ENCODE measurements at regions of chr11 and their contacts with region 1.

Region 1: DNA sequence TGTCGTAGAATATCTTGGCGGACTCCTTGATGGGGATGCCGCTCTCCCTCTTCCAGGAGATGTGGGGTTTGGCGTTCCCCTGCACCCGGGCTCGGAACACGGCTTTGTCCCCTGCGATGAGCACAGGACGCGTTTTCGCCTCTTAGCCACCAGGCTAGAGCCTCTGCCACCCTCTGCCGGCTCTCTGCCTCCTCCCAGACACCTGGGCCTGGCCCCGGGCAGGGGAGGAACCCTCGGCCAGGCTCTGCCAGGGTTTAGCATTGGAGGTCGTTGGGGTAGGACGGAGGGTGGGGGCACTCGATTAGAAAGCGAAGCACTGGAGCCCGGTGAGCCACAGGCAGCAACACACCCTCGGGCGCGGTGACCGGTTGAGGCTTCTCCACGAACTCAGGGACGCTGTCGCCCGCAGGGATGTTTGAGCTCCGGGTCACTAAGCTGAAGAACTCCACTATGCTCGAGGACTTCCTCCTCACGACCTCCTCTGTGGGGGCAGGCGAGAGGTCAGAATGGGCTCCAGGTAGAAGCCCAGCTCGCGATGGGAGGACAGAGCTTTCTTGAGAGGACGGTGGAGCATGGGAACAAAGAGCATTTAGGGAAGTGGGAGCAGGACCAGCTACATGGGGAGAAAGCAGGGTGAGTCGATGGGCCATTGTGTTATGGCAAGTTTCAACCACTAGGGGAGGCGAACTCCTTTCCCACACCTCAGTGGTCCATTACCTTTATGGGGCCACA is 4.3 kb downstream of the IGSF22 start:
- DNase-seq: peak; percentile 70
- H3K4me3 Mint-ChIP-seq: peak overlapping the region; percentile 78
- H3K27ac Mint-ChIP-seq: no peak overlapping the region
- H3K4me1 Mint-ChIP-seq: peaks cover 2% of the 10 kb centered on the region
- H3K27me3 Mint-ChIP-seq: no peaks in the 10 kb centered on the region

Region 2: DNA sequence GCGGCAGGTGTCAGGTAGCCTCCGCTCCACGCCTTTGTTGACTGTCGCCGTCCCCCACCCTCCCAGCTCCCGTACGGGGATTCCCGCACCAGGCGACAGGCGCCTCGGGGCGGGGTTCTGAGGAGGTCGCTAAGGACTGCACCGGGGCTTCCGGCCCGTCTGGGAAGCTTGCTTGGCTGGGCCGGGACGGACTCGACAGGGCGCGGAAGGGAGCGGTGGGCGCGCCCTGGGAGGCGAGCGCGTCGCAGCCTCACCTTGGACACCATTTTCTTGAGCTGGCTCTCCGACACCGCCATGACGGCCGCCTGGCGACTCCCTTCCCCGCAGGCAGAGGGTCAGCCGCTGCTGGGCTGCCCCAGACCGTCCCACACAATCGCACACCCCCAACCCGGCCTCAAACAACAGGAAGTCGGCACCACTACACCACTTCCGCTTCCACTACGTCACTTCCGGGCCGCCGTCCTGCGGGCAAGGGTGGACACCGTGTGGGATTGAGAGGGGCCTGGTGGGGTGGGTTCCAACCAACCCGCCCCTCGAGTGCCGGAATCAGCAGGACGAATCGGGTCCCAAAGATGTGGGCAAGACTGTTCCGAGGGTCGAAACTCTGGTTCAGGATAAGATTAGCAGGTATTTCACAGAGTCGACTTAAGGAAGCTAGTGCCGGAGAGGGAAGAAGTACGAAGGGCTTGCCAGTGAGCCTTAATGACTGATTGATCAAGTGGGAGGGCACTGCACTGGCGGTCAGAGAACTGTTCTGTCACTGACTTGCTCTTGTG is 195.0 kb before region 1 on chr11 and contains the start of gene TSG101:
- CTCF ChIA-PET with region 1: interaction called, 7 read pairs
- intact Hi-C with region 1: loop called (anchors 1 kb)
- DNase-seq: peak; percentile 94
- H3K4me3 Mint-ChIP-seq: peak within 1 kb of the TSS; percentile 100
- H3K27ac Mint-ChIP-seq: peak within 1 kb of the TSS; percentile 100
- H3K4me1 Mint-ChIP-seq: peaks cover 45% of the 10 kb centered on the region
- H3K27me3 Mint-ChIP-seq: no peaks in the 10 kb centered on the region
- total RNA-seq, gene TSG101: 33.2 to 40.5 TPM

Region 3: GRCh38 chr11:18588297-18589252 is 133.2 kb before region 1 on chr11 and contains the start of gene UEVLD:
- CTCF ChIA-PET with region 1: interaction called, 4 read pairs
- intact Hi-C with region 1: loop called (anchors 1 kb)
- DNase-seq: peak; percentile 63
- H3K4me3 Mint-ChIP-seq: no peak within 1 kb of the TSS
- H3K27ac Mint-ChIP-seq: no peak within 1 kb of the TSS
- H3K4me1 Mint-ChIP-seq: peaks cover 8% of the 10 kb centered on the region
- H3K27me3 Mint-ChIP-seq: no peaks in the 10 kb centered on the region
- total RNA-seq, gene UEVLD: 8.9 to 9.2 TPM

Region 4: GRCh38 chr11:18669220-18669598 is 52.5 kb before region 1 on chr11:
- CTCF ChIA-PET with region 1: interaction called, 4 read pairs
- intact Hi-C with region 1: loop called (anchors 2 kb)
- DNase-seq: peak; percentile 23
- H3K4me3 Mint-ChIP-seq: no peak overlapping the region
- H3K27ac Mint-ChIP-seq: peak overlapping the region; percentile 63
- H3K4me1 Mint-ChIP-seq: peaks cover 70% of the 10 kb centered on the region
- H3K27me3 Mint-ChIP-seq: no peaks in the 10 kb centered on the region

Region 5: GRCh38 chr11:18706330-18707243 is 15.1 kb before region 1 on chr11:
- CTCF ChIA-PET with region 1: interaction called, 51 read pairs
- intact Hi-C with region 1: no loop called
- DNase-seq: peak; percentile 77
- H3K4me3 Mint-ChIP-seq: peak overlapping the region; percentile 71
- H3K27ac Mint-ChIP-seq: peak overlapping the region; percentile 69
- H3K4me1 Mint-ChIP-seq: peaks cover 23% of the 10 kb centered on the region
- H3K27me3 Mint-ChIP-seq: no peaks in the 10 kb centered on the region

Region 6: DNA sequence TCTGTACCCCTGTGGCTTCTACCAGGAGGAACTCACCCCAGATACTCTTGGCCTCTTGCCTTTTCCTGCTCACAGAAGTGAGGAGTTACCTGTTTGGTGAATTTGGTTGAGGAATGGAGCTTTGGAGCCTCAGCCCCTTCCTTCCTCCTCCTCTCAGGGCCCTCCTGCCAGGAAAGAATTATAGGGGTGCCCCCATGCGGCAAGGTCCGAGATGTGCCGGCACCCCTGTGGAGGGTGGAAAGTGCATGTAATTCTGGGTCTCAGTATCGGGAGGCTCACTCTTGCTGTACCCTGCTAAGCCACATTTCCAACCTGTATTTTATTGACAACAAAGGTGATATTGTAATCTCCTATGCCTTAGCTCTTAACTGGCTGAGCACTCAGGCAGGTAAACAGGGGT is 18.0 kb after region 1 on chr11:
- CTCF ChIA-PET with region 1: interaction called, 52 read pairs
- intact Hi-C with region 1: no loop called
- DNase-seq: no peak
- H3K4me3 Mint-ChIP-seq: no peak overlapping the region
- H3K27ac Mint-ChIP-seq: no peak overlapping the region
- H3K4me1 Mint-ChIP-seq: no peaks in the 10 kb centered on the region
- H3K27me3 Mint-ChIP-seq: no peaks in the 10 kb centered on the region

Region 7: DNA sequence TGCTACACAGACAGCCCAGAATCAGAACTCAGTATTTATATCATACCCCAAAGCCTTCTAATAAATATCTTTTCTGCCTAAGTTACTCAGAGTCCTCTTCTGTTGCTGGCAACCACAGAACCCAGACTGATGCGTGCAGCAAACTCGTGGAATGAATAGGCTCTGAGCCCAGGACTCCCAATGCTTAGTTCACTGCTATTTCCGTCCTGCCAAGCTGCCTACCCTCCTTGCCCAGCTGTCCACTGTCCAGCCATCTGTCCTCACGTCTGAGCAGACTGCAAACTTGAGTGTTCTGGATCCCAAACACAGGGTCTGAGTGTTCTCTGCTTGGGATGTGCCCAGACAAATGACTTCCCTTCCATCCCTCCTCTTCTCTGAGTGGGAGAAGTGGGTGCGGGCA is 50.5 kb after region 1 on chr11:
- CTCF ChIA-PET with region 1: no interaction called
- intact Hi-C with region 1: no loop called
- DNase-seq: no peak
- H3K4me3 Mint-ChIP-seq: no peak overlapping the region
- H3K27ac Mint-ChIP-seq: no peak overlapping the region
- H3K4me1 Mint-ChIP-seq: peaks cover 2% of the 10 kb centered on the region
- H3K27me3 Mint-ChIP-seq: no peaks in the 10 kb centered on the region

Region 8: GRCh38 chr11:18865951-18866350 is 144.2 kb after region 1 on chr11:
- CTCF ChIA-PET with region 1: no interaction called
- intact Hi-C with region 1: no loop called
- DNase-seq: no peak
- H3K4me3 Mint-ChIP-seq: no peak overlapping the region
- H3K27ac Mint-ChIP-seq: no peak overlapping the region
- H3K4me1 Mint-ChIP-seq: no peaks in the 10 kb centered on the region
- H3K27me3 Mint-ChIP-seq: peaks cover 19% of the 10 kb centered on the region

Measured in activated naive CD4-positive, alpha-beta T cell treated with anti-CD3 and anti-CD28 coated beads for 36 hours (primary cell).